ENCODE measurements at regions of chr20 and their contacts with region 1.

Region 1: DNA sequence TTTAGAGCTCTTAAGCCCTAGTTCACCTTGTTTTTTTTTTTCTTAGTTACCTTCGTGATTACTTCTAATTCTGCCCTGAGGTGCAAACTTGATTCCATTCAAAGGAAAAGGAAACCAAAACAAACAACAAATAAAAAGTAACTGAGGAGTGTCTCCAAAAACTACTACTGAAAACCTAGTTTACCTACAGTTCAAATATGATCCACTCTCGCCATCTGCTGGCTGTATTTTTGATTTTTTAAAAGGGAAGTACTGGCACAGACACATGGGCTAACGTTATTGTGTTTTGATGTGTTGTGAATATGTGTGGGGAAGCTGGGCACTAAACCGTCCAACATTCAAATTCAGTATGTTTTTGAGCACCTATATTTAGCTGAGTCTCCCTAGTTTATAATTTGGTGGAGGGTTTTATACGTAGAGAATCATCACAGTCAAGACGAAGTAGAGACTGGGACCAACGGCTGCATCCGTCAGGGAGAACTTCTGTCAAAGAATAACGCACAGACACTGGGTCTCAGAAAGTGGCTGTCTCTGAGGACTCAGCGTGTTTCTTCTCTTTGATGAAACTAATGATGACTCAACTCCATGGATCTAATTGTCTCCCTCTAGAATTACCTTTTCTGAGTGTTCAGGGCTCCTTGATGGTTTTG is 373.5 kb upstream of the BTBD3 start:
- DNase-seq: peak; percentile 75
- ATAC-seq: peak; percentile 82
- H3K4me3 ChIP-seq: no peak overlapping the region; the same call in 1 of the 2 replicates
- H3K27ac ChIP-seq: no peak overlapping the region
- H3K4me1 ChIP-seq: no peaks in the 10 kb centered on the region; the same call in none of the 2 replicates
- H3K27me3 ChIP-seq: peaks cover 4% of the 10 kb centered on the region; the same call in 1 of the 2 replicates
- CTCF ChIP-seq: peak; percentile 71
- POLR2A ChIP-seq: no peak
- RAD21 ChIP-seq: peak; percentile 87

Region 2: GRCh38 chr20:9978397-9979004 is 1565.7 kb before region 1 on chr20:
- CTCF ChIA-PET with region 1: interaction called, 7 read pairs
- POLR2A ChIA-PET with region 1: no interaction called
- dilution Hi-C with region 1: no loop called
- in situ Hi-C with region 1: no loop called
- intact Hi-C with region 1: loop called (anchors 5 kb)
- DNase-seq: peak; percentile 89
- ATAC-seq: peak; percentile 97
- H3K4me3 ChIP-seq: no peak overlapping the region
- H3K27ac ChIP-seq: no peak overlapping the region
- H3K4me1 ChIP-seq: no peaks in the 10 kb centered on the region
- H3K27me3 ChIP-seq: peaks cover 3% of the 10 kb centered on the region; the same call in 1 of the 2 replicates
- CTCF ChIP-seq: peak; percentile 98
- POLR2A ChIP-seq: no peak
- RAD21 ChIP-seq: peak; percentile 98

Region 3: DNA sequence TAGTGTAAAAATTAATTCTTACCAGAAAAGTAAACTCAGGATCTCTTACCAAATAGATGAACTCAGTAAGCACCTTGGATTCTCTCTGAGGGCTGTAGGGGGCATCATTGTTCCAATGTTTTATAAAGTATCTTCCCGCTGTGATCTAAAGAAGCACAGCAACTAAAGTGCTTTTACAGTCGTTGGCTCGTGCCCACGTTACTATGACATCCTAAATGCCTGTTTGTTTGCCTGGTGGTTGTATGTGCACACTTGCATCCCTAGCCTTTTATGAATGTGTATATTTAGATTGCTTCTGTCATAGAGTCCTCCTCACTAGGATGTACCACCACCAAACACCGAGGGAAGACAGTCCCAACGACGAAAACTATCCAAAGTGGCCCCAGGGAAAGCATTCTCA is 1074.6 kb before region 1 on chr20:
- CTCF ChIA-PET with region 1: no interaction called
- POLR2A ChIA-PET with region 1: no interaction called
- dilution Hi-C with region 1: no loop called
- in situ Hi-C with region 1: loop called (anchors 10 kb)
- intact Hi-C with region 1: loop called (anchors 2 kb)
- DNase-seq: peak; percentile 87
- ATAC-seq: peak; percentile 80
- H3K4me3 ChIP-seq: no peak overlapping the region
- H3K27ac ChIP-seq: no peak overlapping the region
- H3K4me1 ChIP-seq: peaks cover 4% of the 10 kb centered on the region
- H3K27me3 ChIP-seq: no peaks in the 10 kb centered on the region
- CTCF ChIP-seq: peak; percentile 68
- POLR2A ChIP-seq: no peak
- RAD21 ChIP-seq: peak; percentile 77

Region 4: DNA sequence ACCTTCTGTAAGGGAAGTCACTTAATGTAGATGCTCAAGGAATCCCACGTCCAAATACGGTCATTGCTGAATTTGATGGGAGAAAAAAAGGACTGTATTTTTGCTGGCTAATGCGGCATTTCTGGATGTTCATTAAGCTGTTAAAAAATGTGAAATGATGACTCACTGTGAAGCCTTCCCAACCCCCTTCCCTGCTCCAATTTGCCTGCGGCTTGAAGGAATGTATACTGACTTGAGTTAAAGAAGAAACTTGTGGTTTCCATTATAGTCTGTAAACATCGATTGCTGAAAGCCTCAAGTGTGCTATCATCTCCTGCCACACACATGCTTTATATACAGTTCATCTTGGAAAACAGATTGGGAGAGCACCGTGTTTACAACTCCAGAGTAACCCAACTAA is 621.2 kb before region 1 on chr20:
- CTCF ChIA-PET with region 1: no interaction called
- POLR2A ChIA-PET with region 1: no interaction called
- dilution Hi-C with region 1: no loop called
- in situ Hi-C with region 1: no loop called
- intact Hi-C with region 1: loop called (anchors 5 kb)
- DNase-seq: peak; percentile 96
- ATAC-seq: peak; percentile 70
- H3K4me3 ChIP-seq: no peak overlapping the region
- H3K27ac ChIP-seq: peak overlapping the region; percentile 93
- H3K4me1 ChIP-seq: peaks cover 34% of the 10 kb centered on the region
- H3K27me3 ChIP-seq: no peaks in the 10 kb centered on the region
- CTCF ChIP-seq: no peak
- POLR2A ChIP-seq: no peak
- RAD21 ChIP-seq: no peak

Region 5: GRCh38 chr20:11274141-11274594 is 270.0 kb before region 1 on chr20:
- CTCF ChIA-PET with region 1: interaction called, 3 read pairs
- POLR2A ChIA-PET with region 1: no interaction called
- dilution Hi-C with region 1: no loop called
- in situ Hi-C with region 1: loop called (anchors 5 kb)
- intact Hi-C with region 1: loop called (anchors 1 kb)
- DNase-seq: peak; percentile 79
- ATAC-seq: peak; percentile 94
- H3K4me3 ChIP-seq: no peak overlapping the region
- H3K27ac ChIP-seq: no peak overlapping the region
- H3K4me1 ChIP-seq: no peaks in the 10 kb centered on the region
- H3K27me3 ChIP-seq: no peaks in the 10 kb centered on the region
- CTCF ChIP-seq: peak; percentile 78
- POLR2A ChIP-seq: no peak
- RAD21 ChIP-seq: peak; percentile 90

Region 6: DNA sequence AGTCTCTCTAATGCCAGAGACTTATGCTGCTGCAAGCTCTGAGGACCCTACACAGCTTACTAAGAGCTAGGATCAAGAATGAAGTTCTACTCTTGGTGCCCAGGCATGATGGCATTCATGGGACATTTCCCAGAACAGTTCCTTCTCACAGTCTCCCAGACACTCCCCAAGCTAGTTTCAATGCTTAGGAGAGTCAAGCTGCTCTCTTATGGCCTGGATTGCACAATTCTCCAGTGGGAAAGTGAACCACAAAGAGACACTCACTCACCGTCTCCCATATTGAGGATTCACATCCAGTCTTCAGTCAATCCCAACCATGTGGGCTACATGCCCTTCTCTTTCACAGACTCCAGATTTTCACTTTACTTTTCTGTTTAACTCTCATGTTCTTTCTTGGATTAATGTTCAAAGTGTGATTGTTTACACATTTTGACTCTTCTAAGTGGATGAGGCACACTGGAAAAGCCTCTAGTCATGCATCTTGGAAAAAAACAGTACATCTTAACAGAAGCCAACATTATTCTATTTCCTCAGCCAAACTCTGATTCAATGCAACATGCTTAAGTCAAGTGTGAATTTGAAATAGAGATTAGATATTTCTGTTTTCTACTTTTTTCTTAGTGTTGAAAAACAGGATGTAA is 74.2 kb before region 1 on chr20:
- CTCF ChIA-PET with region 1: no interaction called
- POLR2A ChIA-PET with region 1: no interaction called
- dilution Hi-C with region 1: no loop called
- in situ Hi-C with region 1: no loop called
- intact Hi-C with region 1: no loop called
- DNase-seq: no peak
- ATAC-seq: no peak
- H3K4me3 ChIP-seq: no peak overlapping the region
- H3K27ac ChIP-seq: no peak overlapping the region
- H3K4me1 ChIP-seq: no peaks in the 10 kb centered on the region
- H3K27me3 ChIP-seq: peaks cover 9% of the 10 kb centered on the region
- CTCF ChIP-seq: no peak
- POLR2A ChIP-seq: no peak
- RAD21 ChIP-seq: no peak

Region 7: DNA sequence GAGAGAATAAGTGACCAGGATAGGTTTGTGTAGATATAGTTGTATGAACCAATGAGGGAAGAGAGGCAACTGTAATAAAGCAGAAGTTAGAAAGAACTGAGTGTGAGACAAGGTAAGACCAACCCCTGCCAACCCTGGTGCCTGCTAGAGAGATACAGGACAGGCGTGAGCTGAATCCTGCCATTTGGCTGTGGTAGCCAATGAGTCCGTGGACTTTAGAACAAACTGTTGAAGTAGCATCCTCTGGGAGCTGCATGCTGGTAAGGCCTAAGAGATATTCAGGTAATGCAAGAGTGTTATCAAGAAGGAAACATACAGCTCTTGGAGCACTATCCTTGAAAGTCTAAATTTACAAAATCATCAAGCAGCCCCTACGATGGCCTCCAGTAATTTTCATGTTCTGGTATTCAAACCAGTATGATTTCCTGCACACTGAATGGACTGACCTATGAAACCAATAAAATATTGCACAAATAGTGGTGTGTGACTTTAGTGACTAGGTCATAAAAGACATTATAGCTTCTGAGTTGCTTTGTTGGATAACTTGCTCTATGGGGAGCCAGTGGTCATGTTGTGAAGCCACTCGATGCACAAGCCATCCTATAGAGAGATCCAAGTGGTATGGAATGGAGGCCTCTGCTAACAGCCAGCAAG is 397.6 kb after region 1 on chr20:
- CTCF ChIA-PET with region 1: no interaction called
- POLR2A ChIA-PET with region 1: interaction called, 11 read pairs
- dilution Hi-C with region 1: no loop called
- in situ Hi-C with region 1: no loop called
- intact Hi-C with region 1: no loop called
- DNase-seq: no peak
- ATAC-seq: no peak
- H3K4me3 ChIP-seq: no peak overlapping the region
- H3K27ac ChIP-seq: no peak overlapping the region
- H3K4me1 ChIP-seq: no peaks in the 10 kb centered on the region
- H3K27me3 ChIP-seq: no peaks in the 10 kb centered on the region
- CTCF ChIP-seq: no peak
- POLR2A ChIP-seq: no peak
- RAD21 ChIP-seq: no peak